CD4-positive, alpha-beta T cell (primary cell): ENCODE measurements at regions of chrX and their contacts with region 1.

Region 1: GRCh38 chrX:47384502-47384901 is 14.1 kb downstream of the ZNF157 start:
- DNase-seq: peak; percentile 51 to 87 (median 63)
- ATAC-seq: peak; percentile 50
- H3K4me3 ChIP-seq: no peak overlapping the region
- H3K4me3 Mint-ChIP-seq: peak overlapping the region; percentile 51
- H3K27ac ChIP-seq: no peak overlapping the region
- H3K27ac Mint-ChIP-seq: peak overlapping the region; percentile 74
- H3K4me1 ChIP-seq: peaks cover 16% of the 10 kb centered on the region
- H3K4me1 Mint-ChIP-seq: peaks cover 29% of the 10 kb centered on the region
- H3K27me3 ChIP-seq: no peaks in the 10 kb centered on the region
- H3K27me3 Mint-ChIP-seq: no peaks in the 10 kb centered on the region
- CTCF ChIP-seq: peak; percentile 70

Region 2: GRCh38 chrX:47217642-47218279 is 166.7 kb before region 1 on chrX:
- CTCF ChIA-PET with region 1: interaction called, 11 read pairs
- POLR2A ChIA-PET with region 1: interaction called, 16 read pairs
- intact Hi-C with region 1: no loop called
- DNase-seq: peak; percentile 89 to 99 (median 96)
- ATAC-seq: peak; percentile 81
- H3K4me3 ChIP-seq: peak overlapping the region; percentile 81
- H3K4me3 Mint-ChIP-seq: peak overlapping the region; percentile 98
- H3K27ac ChIP-seq: peak overlapping the region; percentile 89 to 99
- H3K27ac Mint-ChIP-seq: peak overlapping the region; percentile 98
- H3K4me1 ChIP-seq: peaks cover 30% of the 10 kb centered on the region
- H3K4me1 Mint-ChIP-seq: peaks cover 38% of the 10 kb centered on the region
- H3K27me3 ChIP-seq: no peaks in the 10 kb centered on the region
- H3K27me3 Mint-ChIP-seq: no peaks in the 10 kb centered on the region
- CTCF ChIP-seq: no peak

Region 3: DNA sequence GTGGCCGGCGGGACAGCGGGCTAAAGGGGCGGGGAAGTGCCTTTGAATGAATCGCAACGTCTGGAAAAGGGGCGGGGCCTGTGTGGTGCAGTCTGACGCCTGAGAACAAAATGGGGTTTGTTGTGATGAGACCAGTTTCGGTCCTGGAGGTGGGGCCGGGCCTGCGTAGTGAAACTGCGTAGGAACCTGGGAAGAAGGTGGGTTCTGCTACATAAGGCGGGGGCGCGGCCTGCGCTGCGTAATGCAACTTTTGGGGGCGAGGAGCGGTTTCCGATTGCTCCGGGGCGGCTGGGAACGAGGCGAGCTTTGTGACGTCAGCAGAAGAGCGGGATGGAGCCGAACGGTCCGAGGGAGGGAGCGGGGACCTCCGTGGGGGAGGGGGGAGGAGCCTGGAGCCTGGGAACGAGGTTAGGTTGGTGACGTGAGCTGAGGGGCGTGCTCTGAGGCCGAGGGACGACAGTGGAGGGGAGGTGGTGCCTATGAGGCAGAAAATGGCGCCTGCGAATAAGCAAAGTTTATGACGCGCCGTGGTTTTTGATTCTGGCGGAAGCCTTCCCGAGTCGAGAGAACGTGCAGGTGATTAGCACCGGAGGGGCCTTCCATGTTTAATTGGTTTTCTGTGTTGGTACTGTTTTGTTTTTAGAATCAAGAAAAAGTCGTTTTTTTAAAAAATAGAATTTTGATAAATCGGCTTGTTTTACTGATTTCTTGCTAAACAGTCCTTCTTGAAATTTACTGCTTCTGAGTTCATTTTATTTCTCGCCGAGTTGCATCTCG is 151.0 kb before region 1 on chrX:
- CTCF ChIA-PET with region 1: interaction called, 11 read pairs
- POLR2A ChIA-PET with region 1: interaction called, 15 read pairs
- intact Hi-C with region 1: loop called (anchors 2 to 5 kb)
- DNase-seq: peak; percentile 87 to 98 (median 92)
- ATAC-seq: peak; percentile 88
- H3K4me3 ChIP-seq: peak overlapping the region; percentile 91
- H3K4me3 Mint-ChIP-seq: peak overlapping the region; percentile 91
- H3K27ac ChIP-seq: peak overlapping the region; percentile 95 to 98
- H3K27ac Mint-ChIP-seq: peak overlapping the region; percentile 93
- H3K4me1 ChIP-seq: peaks cover 10% of the 10 kb centered on the region
- H3K4me1 Mint-ChIP-seq: peaks cover 31% of the 10 kb centered on the region
- H3K27me3 ChIP-seq: no peaks in the 10 kb centered on the region
- H3K27me3 Mint-ChIP-seq: no peaks in the 10 kb centered on the region
- CTCF ChIP-seq: no peak

Region 4: GRCh38 chrX:47311932-47312774 is 72.3 kb before region 1 on chrX:
- CTCF ChIA-PET with region 1: interaction called, 3 read pairs
- POLR2A ChIA-PET with region 1: no interaction called
- intact Hi-C with region 1: loop called in 1 of 2 experiments (anchors 10 kb)
- DNase-seq: peak; percentile 12 to 75 (median 31)
- ATAC-seq: peak; percentile 75
- H3K4me3 ChIP-seq: no peak overlapping the region
- H3K4me3 Mint-ChIP-seq: no peak overlapping the region
- H3K27ac ChIP-seq: no peak overlapping the region
- H3K27ac Mint-ChIP-seq: no peak overlapping the region
- H3K4me1 ChIP-seq: peaks cover 3% of the 10 kb centered on the region
- H3K4me1 Mint-ChIP-seq: no peaks in the 10 kb centered on the region
- H3K27me3 ChIP-seq: no peaks in the 10 kb centered on the region
- H3K27me3 Mint-ChIP-seq: no peaks in the 10 kb centered on the region
- CTCF ChIP-seq: peak; percentile 46

Region 5: GRCh38 chrX:47446431-47446830 is 61.9 kb after region 1 on chrX:
- CTCF ChIA-PET with region 1: no interaction called
- POLR2A ChIA-PET with region 1: no interaction called
- intact Hi-C with region 1: no loop called
- DNase-seq: no peak
- ATAC-seq: no peak
- H3K4me3 ChIP-seq: no peak overlapping the region
- H3K4me3 Mint-ChIP-seq: no peak overlapping the region
- H3K27ac ChIP-seq: no peak overlapping the region
- H3K27ac Mint-ChIP-seq: no peak overlapping the region
- H3K4me1 ChIP-seq: no peaks in the 10 kb centered on the region
- H3K4me1 Mint-ChIP-seq: no peaks in the 10 kb centered on the region
- H3K27me3 ChIP-seq: no peaks in the 10 kb centered on the region
- H3K27me3 Mint-ChIP-seq: no peaks in the 10 kb centered on the region
- CTCF ChIP-seq: no peak

Region 6: GRCh38 chrX:47644557-47645091 is 260.1 kb after region 1 on chrX:
- CTCF ChIA-PET with region 1: no interaction called
- POLR2A ChIA-PET with region 1: no interaction called
- intact Hi-C with region 1: loop called in 1 of 2 experiments (anchors 10 kb)
- DNase-seq: peak in 3 of 14 experiments; percentile 24 to 48 (median 37)
- ATAC-seq: peak; percentile 61
- H3K4me3 ChIP-seq: no peak overlapping the region
- H3K4me3 Mint-ChIP-seq: no peak overlapping the region
- H3K27ac ChIP-seq: no peak overlapping the region
- H3K27ac Mint-ChIP-seq: peak overlapping the region; percentile 49
- H3K4me1 ChIP-seq: peaks cover 25% of the 10 kb centered on the region
- H3K4me1 Mint-ChIP-seq: peaks cover 44% of the 10 kb centered on the region
- H3K27me3 ChIP-seq: no peaks in the 10 kb centered on the region
- H3K27me3 Mint-ChIP-seq: no peaks in the 10 kb centered on the region
- CTCF ChIP-seq: no peak